GM12878 (cell line): ENCODE measurements at regions of chr14 and their contacts with region 1.

Region 1: DNA sequence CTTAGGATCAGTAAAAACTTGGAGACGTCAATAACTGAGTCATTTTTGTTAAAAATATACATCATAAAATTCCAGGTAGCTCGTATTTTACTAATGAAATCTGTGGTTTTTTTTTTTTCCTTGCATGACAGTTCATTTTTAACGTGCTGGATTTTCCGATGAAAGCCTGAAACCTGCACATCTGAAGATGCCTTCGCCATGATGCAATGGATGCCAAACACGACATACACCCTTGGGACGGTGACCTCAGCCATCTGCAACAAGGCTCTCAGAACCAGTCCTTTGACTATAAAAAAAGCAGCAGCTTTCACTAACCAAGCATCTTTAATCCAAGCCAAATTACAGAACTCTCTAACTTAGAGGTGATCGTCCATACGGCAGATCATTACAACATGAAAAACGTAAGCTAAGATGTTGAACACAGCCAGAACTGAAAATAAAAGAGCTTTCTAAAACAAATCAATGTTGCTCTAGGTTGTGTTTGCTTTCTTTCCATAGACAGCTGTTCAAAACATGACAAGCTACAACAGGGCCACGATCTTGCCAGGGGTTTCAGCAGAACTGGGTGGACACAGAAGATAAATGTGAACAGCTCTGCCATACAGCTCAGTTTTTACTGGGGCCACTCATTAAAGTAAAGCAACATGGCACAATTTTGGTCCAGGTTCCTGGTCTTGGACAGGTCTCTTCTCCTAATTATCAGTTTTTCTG is 7.8 kb downstream of the NIN start:
- DNase-seq: peak; percentile 39
- ATAC-seq: peak; percentile 38
- H3K4me3 ChIP-seq: peak overlapping the region; percentile 74
- H3K27ac ChIP-seq: peak overlapping the region; percentile 88
- H3K4me1 ChIP-seq: peaks cover 37% of the 10 kb centered on the region
- H3K27me3 ChIP-seq: no peaks in the 10 kb centered on the region
- CTCF ChIP-seq: no peak
- EP300 ChIP-seq: no peak
- POLR2A ChIP-seq: no peak; the same call in 1 of the 2 replicates
- RAD21 ChIP-seq: no peak

Region 2: DNA sequence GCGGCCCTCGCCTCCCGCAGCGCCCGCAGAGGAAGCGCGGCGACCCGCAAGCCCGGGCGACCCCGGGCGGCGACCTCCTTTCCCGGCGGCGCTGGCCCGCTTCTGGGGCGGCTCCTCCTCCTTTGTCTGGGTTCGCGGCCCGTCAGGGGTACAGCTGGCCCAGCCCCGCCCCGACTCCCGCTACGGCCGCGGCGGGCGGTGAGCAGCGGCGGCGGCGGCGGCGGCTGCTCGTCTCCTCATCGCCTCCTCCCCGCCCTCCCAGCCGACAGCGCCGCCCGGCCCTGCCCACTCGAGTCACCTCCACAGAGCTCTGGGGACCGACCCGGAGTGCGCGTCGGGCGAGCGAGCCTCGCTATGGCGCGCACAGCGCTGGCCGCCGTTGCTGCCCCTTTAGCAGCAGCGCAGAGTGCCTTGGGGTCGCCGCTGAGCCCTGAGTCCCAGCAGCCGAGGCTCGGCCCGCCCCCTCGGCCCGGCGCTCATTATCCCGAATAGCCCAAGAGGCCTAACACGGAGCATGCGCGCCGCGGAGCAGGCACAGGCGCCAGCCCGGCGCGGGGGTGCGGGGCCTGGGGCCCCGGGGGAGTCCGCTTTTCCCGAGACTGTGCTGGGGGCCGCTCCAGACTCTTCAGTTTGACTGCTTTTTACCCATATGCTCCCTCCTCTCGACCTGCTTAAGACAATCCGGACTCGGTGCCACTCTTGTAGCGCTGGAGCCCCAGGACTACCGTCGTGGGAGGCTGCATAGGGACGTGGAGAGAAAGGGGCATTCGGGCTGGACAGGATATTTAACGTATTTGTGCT is 591.5 kb before region 1 on chr14 and contains the start of gene SOS2:
- CTCF ChIA-PET with region 1: no interaction called
- POLR2A ChIA-PET with region 1: no interaction called
- RAD21 ChIA-PET with region 1: no interaction called
- SMC1A ChIA-PET with region 1: no interaction called
- in situ Hi-C with region 1: no loop called
- intact Hi-C with region 1: loop called (anchors 5 kb)
- DNase-seq: peak; percentile 43
- ATAC-seq: peak; percentile 91
- H3K4me3 ChIP-seq: peak within 1 kb of the TSS; percentile 75
- H3K27ac ChIP-seq: peak within 1 kb of the TSS; percentile 73
- H3K4me1 ChIP-seq: no peaks in the 10 kb centered on the region; the same call in 1 of the 2 replicates
- H3K27me3 ChIP-seq: no peaks in the 10 kb centered on the region
- CTCF ChIP-seq: no peak
- EP300 ChIP-seq: no peak
- POLR2A ChIP-seq: peak; percentile 88
- RAD21 ChIP-seq: no peak
- polyA plus RNA-seq, gene SOS2: 2.9 to 4.1 TPM

Region 3: GRCh38 chr14:50667996-50668825 is 155.0 kb before region 1 on chr14 and contains the start of gene SAV1:
- CTCF ChIA-PET with region 1: no interaction called
- POLR2A ChIA-PET with region 1: interaction called, 6 read pairs
- RAD21 ChIA-PET with region 1: interaction called, 8 read pairs
- SMC1A ChIA-PET with region 1: no interaction called
- in situ Hi-C with region 1: no loop called
- intact Hi-C with region 1: loop called (anchors 5 kb)
- DNase-seq: no peak
- ATAC-seq: peak; percentile 78
- H3K4me3 ChIP-seq: peak within 1 kb of the TSS; percentile 90
- H3K27ac ChIP-seq: peak within 1 kb of the TSS; percentile 30
- H3K4me1 ChIP-seq: no peaks in the 10 kb centered on the region
- H3K27me3 ChIP-seq: no peaks in the 10 kb centered on the region
- CTCF ChIP-seq: no peak
- EP300 ChIP-seq: no peak
- POLR2A ChIP-seq: peak; percentile 84
- RAD21 ChIP-seq: peak; percentile 11; the same call in 1 of the 2 replicates
- polyA plus RNA-seq, gene SAV1: 10.1 to 15.1 TPM

Region 4: GRCh38 chr14:50792051-50792477 is 31.1 kb before region 1 on chr14:
- CTCF ChIA-PET with region 1: interaction called, 76 read pairs
- POLR2A ChIA-PET with region 1: interaction called, 39 read pairs
- RAD21 ChIA-PET with region 1: interaction called, 91 read pairs
- SMC1A ChIA-PET with region 1: interaction called, 360 read pairs
- in situ Hi-C with region 1: no loop called
- intact Hi-C with region 1: loop called (anchors 2 kb)
- DNase-seq: no peak
- ATAC-seq: peak; percentile 37
- H3K4me3 ChIP-seq: peak overlapping the region; percentile 65
- H3K27ac ChIP-seq: peak overlapping the region; percentile 97
- H3K4me1 ChIP-seq: peaks cover 95% of the 10 kb centered on the region
- H3K27me3 ChIP-seq: no peaks in the 10 kb centered on the region
- CTCF ChIP-seq: no peak
- EP300 ChIP-seq: no peak
- POLR2A ChIP-seq: peak; percentile 33; the same call in 1 of the 2 replicates
- RAD21 ChIP-seq: no peak

Region 5: DNA sequence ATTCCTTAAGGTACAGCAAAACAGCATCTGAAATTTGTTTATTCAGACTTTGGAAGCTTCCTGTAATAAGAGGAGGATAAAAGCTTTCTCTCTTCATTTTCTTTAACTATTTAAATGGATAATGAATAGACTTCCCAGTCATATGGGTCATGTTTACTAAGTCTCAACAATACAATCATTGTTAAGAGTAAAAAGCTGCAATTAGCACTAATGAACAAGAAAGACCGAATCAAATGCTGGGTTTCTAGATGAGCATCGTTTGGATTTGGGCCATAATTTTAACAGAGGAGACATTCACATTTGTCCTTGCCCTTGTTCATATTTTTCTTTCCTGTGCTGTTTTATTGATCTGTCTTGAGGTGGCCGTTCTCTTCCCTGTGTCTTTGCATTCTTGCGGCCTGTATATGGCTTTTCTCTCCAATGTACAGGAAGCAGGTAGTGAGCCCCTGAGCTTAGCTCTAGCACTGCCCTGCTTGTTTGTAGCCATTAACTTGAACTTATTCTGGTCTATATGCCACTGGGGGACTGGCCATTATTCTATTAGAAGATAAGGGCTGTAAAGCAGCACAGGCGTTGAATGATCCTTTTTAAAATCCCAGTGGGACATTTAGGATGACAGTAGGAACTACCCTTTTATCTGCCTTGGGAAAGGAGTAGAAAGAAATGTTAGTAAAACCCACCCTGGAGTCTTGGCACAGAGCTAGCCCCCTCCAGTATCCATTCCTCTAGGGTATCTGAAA is 83.3 kb after region 1 on chr14:
- CTCF ChIA-PET with region 1: no interaction called
- POLR2A ChIA-PET with region 1: no interaction called
- RAD21 ChIA-PET with region 1: no interaction called
- SMC1A ChIA-PET with region 1: no interaction called
- in situ Hi-C with region 1: no loop called
- intact Hi-C with region 1: no loop called
- DNase-seq: no peak
- ATAC-seq: no peak
- H3K4me3 ChIP-seq: no peak overlapping the region
- H3K27ac ChIP-seq: no peak overlapping the region
- H3K4me1 ChIP-seq: no peaks in the 10 kb centered on the region
- H3K27me3 ChIP-seq: no peaks in the 10 kb centered on the region
- CTCF ChIP-seq: no peak
- EP300 ChIP-seq: no peak
- POLR2A ChIP-seq: no peak
- RAD21 ChIP-seq: no peak